Activated naive CD4-positive, alpha-beta T cell treated with anti-CD3 and anti-CD28 coated beads for 36 hours (primary cell): ENCODE measurements at regions of chr17 and their contacts with region 1.

Region 1: GRCh38 chr17:7856883-7857723 is at the start of gene NAA38:
- DNase-seq: peak; percentile 98
- H3K4me3 Mint-ChIP-seq: no peak within 1 kb of the TSS
- H3K27ac Mint-ChIP-seq: no peak within 1 kb of the TSS
- H3K4me1 Mint-ChIP-seq: peaks cover 22% of the 10 kb centered on the region
- H3K27me3 Mint-ChIP-seq: no peaks in the 10 kb centered on the region
- total RNA-seq, gene NAA38: 75.0 to 75.3 TPM

Region 2: DNA sequence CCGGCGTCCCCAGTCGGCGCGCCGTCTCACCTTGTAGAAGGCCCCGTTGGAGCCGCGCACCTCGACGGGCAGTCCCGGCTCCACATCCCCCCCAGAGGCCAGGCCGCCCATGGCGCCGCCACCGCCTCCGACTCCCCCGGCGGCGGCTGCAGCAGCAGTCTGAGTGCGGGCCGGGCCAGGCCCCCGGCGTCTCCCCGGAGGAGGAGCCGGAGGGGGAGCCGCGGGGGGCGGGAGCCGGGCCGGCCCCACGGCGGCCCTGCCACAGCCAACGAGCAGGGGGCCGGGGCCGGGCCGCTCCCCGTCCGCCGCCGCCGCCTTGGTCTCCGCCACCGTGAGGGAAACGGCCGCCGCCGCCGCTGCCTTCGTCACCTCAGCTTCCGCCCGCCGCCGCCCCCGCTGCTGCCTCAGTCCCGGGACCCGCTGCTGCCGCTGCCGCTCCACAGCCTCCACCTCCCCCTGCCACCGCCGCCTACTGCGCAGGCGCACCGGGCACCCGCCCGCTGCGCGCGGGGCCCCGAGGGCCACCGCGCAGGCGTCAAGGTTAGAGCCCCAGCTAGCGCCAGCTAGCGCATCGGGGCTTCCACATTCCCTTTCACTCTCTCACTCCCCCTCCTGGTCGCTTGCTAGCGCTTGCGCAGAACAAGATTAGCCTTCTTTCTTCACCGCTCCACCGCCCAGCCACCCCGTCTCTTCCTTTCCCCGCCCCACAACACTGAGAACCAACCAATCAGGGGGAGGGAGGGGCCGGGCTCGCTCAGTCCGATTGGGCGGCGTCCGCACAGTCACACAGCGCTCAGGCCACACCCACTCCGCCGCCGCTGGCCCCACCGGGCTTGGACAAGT is 242.5 kb before region 1 on chr17 and contains the start of gene FXR2:
- CTCF ChIA-PET with region 1: no interaction called
- intact Hi-C with region 1: loop called (anchors 1 kb)
- DNase-seq: peak; percentile 100
- H3K4me3 Mint-ChIP-seq: peak within 1 kb of the TSS; percentile 83
- H3K27ac Mint-ChIP-seq: peak within 1 kb of the TSS; percentile 84
- H3K4me1 Mint-ChIP-seq: peaks cover 32% of the 10 kb centered on the region
- H3K27me3 Mint-ChIP-seq: no peaks in the 10 kb centered on the region
- total RNA-seq, gene FXR2: 29.7 to 36.8 TPM

Region 3: GRCh38 chr17:7834962-7835813 is 21.9 kb before region 1 on chr17:
- CTCF ChIA-PET with region 1: interaction called, 6 read pairs
- intact Hi-C with region 1: loop called (anchors 1 kb)
- DNase-seq: peak; percentile 94
- H3K4me3 Mint-ChIP-seq: peak overlapping the region; percentile 93
- H3K27ac Mint-ChIP-seq: peak overlapping the region; percentile 94
- H3K4me1 Mint-ChIP-seq: peaks cover 44% of the 10 kb centered on the region
- H3K27me3 Mint-ChIP-seq: no peaks in the 10 kb centered on the region

Region 4: GRCh38 chr17:7915611-7916382 is 58.7 kb after region 1 on chr17 and contains the start of gene RNF227:
- CTCF ChIA-PET with region 1: interaction called, 4 read pairs
- intact Hi-C with region 1: loop called (anchors 1 kb)
- DNase-seq: peak; percentile 91
- H3K4me3 Mint-ChIP-seq: peak within 1 kb of the TSS; percentile 93
- H3K27ac Mint-ChIP-seq: peak within 1 kb of the TSS; percentile 92
- H3K4me1 Mint-ChIP-seq: peaks cover 29% of the 10 kb centered on the region
- H3K27me3 Mint-ChIP-seq: no peaks in the 10 kb centered on the region
- total RNA-seq, gene RNF227: 3.1 to 3.8 TPM

Region 5: DNA sequence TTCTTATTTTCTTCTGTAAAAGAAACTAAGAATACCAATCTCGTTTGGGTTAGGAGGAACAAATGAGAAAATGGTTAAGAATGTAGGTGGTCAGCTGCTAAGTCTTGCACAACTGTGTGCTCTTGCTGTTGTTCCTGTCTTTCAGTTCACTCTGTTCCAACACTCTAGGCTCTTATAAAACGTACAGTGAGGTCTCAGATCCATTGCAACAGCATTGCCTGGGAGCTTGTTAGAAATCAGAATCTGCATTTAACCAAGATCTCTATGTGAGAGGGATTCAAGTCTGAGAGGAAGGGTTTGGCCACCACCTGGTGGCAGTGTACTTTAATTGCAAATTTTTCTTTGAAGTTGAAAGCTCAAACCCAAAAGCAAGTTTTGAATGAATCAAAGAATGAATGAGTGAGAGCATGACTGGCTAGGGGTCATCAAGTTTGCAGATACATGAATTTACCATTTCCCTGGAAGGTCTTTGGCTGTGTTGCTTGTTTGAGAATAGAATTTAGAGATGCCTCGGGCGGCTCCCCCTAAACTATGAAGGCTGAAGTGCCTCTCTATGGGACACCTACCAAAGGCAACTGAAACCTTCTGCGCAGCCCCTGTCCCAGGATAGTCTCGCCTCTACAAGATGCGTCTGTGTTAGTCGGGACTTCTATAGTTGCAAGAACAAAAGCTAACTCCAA is 184.3 kb after region 1 on chr17:
- CTCF ChIA-PET with region 1: interaction called, 4 read pairs
- intact Hi-C with region 1: loop called (anchors 2 kb)
- DNase-seq: peak; percentile 62
- H3K4me3 Mint-ChIP-seq: no peak overlapping the region
- H3K27ac Mint-ChIP-seq: no peak overlapping the region
- H3K4me1 Mint-ChIP-seq: peaks cover 3% of the 10 kb centered on the region
- H3K27me3 Mint-ChIP-seq: peaks cover 22% of the 10 kb centered on the region